Activated CD8-positive, alpha-beta T cell treated with anti-CD3 and anti-CD28 coated beads for 36 hours (primary cell): ENCODE measurements at regions of chr10 and their contacts with region 1.

Region 1: GRCh38 chr10:97534746-97535367 is 36.1 kb downstream of the UBTD1 start:
- DNase-seq: peak; percentile 64
- ATAC-seq: peak; percentile 89
- H3K4me3 Mint-ChIP-seq: no peak overlapping the region
- H3K27ac Mint-ChIP-seq: no peak overlapping the region
- H3K4me1 Mint-ChIP-seq: no peaks in the 10 kb centered on the region
- H3K27me3 Mint-ChIP-seq: no peaks in the 10 kb centered on the region
- CTCF ChIP-seq: peak; percentile 62

Region 2: GRCh38 chr10:97520978-97521761 is 13.7 kb before region 1 on chr10:
- CTCF ChIA-PET with region 1: interaction called, 13 read pairs
- POLR2A ChIA-PET with region 1: no interaction called
- intact Hi-C with region 1: no loop called
- DNase-seq: no peak
- ATAC-seq: no peak
- H3K4me3 Mint-ChIP-seq: no peak overlapping the region
- H3K27ac Mint-ChIP-seq: no peak overlapping the region
- H3K4me1 Mint-ChIP-seq: no peaks in the 10 kb centered on the region
- H3K27me3 Mint-ChIP-seq: no peaks in the 10 kb centered on the region
- CTCF ChIP-seq: no peak

Region 3: DNA sequence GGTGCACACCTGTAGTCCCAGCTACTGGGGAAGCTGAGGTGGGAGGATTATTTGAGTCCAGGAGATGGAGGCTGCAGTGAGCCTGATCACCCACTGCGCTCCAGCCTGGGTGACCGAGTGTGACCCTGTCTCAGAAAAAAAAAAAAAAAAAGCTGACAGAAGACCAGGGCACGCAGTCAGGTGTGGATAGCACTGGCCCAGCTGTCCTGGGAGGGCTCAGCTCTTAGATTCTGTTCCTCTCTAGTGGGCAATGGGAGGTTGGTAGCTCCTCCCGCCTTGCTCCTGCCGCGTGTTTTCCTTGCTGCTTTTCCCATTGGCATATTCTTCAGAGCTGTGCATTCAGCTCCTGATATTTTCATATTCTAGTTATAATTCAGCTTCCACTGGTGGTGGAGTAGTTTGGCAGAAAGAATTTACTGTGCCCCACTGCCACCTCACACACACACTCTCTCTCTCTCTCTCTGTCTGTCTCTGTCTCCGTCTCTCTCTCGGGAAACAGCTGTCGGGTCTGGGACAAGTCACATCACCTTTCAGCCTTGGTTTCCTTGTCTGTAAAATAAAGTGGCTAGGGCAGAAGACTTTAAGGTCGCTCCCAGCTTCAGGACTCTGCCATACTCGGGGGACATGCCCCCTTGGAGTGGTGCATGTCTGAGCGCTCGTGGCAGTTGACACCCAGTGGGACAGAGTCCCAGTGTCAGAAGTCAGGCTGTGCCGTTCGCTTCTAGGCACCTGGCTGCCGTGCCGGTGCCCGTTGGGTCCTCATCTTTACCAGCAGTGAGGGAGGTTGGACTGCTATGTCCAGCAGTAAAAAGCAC is 11.8 kb after region 1 on chr10:
- CTCF ChIA-PET with region 1: interaction called, 19 read pairs
- POLR2A ChIA-PET with region 1: no interaction called
- intact Hi-C with region 1: no loop called
- DNase-seq: no peak
- ATAC-seq: no peak
- H3K4me3 Mint-ChIP-seq: no peak overlapping the region
- H3K27ac Mint-ChIP-seq: no peak overlapping the region
- H3K4me1 Mint-ChIP-seq: peaks cover 23% of the 10 kb centered on the region
- H3K27me3 Mint-ChIP-seq: no peaks in the 10 kb centered on the region
- CTCF ChIP-seq: no peak

Region 4: DNA sequence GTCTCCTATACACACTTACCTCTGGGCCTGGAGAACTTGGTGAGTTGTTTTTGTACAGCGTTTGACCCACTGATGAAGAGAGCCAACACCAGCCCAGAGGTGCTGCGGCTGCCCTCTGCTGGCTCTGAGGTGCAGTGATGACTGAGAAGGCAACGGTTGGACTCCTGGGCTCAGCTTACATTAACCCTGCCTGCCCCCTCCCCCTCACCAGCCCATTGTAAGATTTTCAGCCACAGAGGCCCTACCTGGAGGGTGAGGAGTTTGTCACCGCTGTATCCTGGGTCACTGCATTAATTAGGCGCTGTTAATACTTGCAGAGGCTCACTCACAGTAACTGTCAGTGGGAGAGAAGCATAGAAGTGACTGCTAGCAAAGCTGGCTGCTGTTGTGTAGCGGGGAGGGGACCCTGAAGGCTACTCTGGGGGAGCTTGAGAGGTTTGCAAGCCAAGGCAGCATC is 18.7 kb after region 1 on chr10:
- CTCF ChIA-PET with region 1: interaction called, 54 read pairs
- POLR2A ChIA-PET with region 1: no interaction called
- intact Hi-C with region 1: no loop called
- DNase-seq: peak; percentile 76
- ATAC-seq: peak; percentile 99
- H3K4me3 Mint-ChIP-seq: no peak overlapping the region
- H3K27ac Mint-ChIP-seq: no peak overlapping the region
- H3K4me1 Mint-ChIP-seq: no peaks in the 10 kb centered on the region
- H3K27me3 Mint-ChIP-seq: no peaks in the 10 kb centered on the region
- CTCF ChIP-seq: peak; percentile 74

Region 5: GRCh38 chr10:97572214-97572989 is 37.5 kb after region 1 on chr10 and contains the start of gene ANKRD2:
- CTCF ChIA-PET with region 1: interaction called, 15 read pairs
- POLR2A ChIA-PET with region 1: no interaction called
- intact Hi-C with region 1: no loop called
- DNase-seq: peak; percentile 72
- ATAC-seq: peak; percentile 89
- H3K4me3 Mint-ChIP-seq: no peak within 1 kb of the TSS
- H3K27ac Mint-ChIP-seq: no peak within 1 kb of the TSS
- H3K4me1 Mint-ChIP-seq: no peaks in the 10 kb centered on the region
- H3K27me3 Mint-ChIP-seq: no peaks in the 10 kb centered on the region
- CTCF ChIP-seq: peak; percentile 71
- total RNA-seq, gene ANKRD2: not detected